Activated CD8-positive, alpha-beta T cell treated with anti-CD3 and anti-CD28 coated beads for 36 hours (primary cell): ENCODE measurements at regions of chr1 and their contacts with region 1.

Region 1: GRCh38 chr1:155244368-155245162 is 10.7 kb downstream of the ENTREP3 start:
- DNase-seq: peak; percentile 100
- ATAC-seq: peak; percentile 97
- H3K4me3 Mint-ChIP-seq: peak overlapping the region; percentile 71
- H3K27ac Mint-ChIP-seq: peak overlapping the region; percentile 95
- H3K4me1 Mint-ChIP-seq: peaks cover 41% of the 10 kb centered on the region
- H3K27me3 Mint-ChIP-seq: peaks cover 2% of the 10 kb centered on the region
- CTCF ChIP-seq: peak; percentile 39

Region 2: DNA sequence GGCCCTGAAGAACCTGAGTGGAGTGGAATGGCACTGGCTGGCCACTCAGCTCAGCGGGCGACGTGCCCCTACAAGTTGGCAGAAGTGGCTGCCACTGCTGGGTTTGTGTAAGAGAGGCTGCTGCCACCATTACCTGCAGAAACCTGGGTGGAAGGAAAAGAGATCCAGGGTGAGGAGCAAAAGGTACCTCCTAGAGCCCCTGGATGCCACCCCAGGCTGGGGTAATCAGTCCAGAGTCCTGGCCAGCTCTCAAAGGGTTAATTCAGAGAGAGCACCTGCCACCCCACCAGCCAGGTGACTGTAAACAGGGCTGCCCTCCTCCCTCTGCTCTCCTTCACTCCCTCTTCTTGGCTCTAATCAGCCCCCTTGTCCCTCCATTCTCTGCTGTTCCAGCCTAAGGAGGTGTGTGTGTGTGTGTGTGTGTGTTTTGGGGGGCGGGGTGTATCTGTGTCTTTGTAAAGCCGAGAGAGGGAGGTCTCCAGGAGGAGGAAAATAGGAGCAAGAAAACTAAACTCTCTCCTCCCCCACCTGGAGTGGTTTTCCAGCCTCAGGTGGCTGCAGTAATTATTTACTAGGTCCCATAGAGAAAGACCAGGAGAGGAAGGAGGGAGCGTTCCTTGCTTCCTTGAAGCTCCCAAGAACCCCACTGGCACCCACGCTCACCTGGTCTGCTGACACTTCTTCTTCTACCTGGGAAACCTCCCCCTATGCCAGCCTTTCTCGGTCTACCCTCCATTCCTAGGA is 58.3 kb before region 1 on chr1:
- CTCF ChIA-PET with region 1: no interaction called
- POLR2A ChIA-PET with region 1: no interaction called
- intact Hi-C with region 1: no loop called
- DNase-seq: no peak
- ATAC-seq: no peak
- H3K4me3 Mint-ChIP-seq: no peak overlapping the region
- H3K27ac Mint-ChIP-seq: no peak overlapping the region
- H3K4me1 Mint-ChIP-seq: no peaks in the 10 kb centered on the region
- H3K27me3 Mint-ChIP-seq: no peaks in the 10 kb centered on the region
- CTCF ChIP-seq: no peak

Region 3: GRCh38 chr1:155208541-155209311 is 35.8 kb before region 1 on chr1 and contains the start of gene MTX1:
- CTCF ChIA-PET with region 1: interaction called, 47 read pairs
- POLR2A ChIA-PET with region 1: interaction called, 22 read pairs
- intact Hi-C with region 1: loop called (anchors 5 kb)
- DNase-seq: peak; percentile 94
- ATAC-seq: peak; percentile 86
- H3K4me3 Mint-ChIP-seq: peak within 1 kb of the TSS; percentile 92
- H3K27ac Mint-ChIP-seq: peak within 1 kb of the TSS; percentile 89
- H3K4me1 Mint-ChIP-seq: peaks cover 29% of the 10 kb centered on the region
- H3K27me3 Mint-ChIP-seq: no peaks in the 10 kb centered on the region
- CTCF ChIP-seq: no peak
- total RNA-seq, gene MTX1: 59.2 to 61.0 TPM

Region 4: DNA sequence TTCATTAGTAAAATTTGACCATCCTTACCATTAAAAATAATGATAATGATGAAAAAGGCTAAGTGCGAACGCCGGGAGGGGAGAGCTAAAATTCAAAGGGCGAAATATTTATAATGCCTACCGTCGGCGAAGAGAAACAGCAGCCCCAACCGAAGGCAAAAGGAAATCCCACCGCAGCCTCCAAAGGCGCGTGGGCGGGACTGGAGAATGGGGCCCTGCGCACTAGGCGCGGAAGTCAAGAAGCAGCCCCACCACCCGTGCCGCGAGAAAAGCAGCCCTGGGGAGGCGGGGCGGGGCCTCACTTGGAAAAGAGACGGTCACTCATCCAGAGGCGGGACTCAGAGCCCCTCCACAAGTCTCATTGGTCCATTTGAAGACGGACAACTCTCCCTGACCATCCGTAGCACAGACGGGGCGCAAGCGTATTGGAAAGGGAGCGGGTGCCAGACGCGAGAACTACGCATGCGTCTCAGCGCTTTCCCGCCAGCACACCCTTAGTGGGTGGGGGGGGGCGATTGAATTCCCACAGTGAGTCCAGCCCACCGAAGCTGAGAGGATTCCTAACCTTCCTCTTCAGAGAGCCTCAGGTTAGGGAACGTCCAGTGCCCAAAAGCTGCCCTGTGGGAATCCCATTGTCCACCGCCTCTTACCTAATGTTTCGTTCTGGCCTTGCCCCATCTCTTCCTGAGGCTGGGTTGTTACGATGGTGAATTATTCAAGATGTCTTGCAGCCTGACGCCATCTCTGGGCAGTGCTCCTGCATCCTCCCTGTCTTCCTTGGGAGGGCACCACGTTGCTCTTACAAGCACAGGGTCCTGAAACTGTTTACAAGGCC is 17.1 kb before region 1 on chr1:
- CTCF ChIA-PET with region 1: interaction called, 18 read pairs
- POLR2A ChIA-PET with region 1: interaction called, 23 read pairs
- intact Hi-C with region 1: no loop called
- DNase-seq: peak; percentile 100
- ATAC-seq: peak; percentile 98
- H3K4me3 Mint-ChIP-seq: peak overlapping the region; percentile 91
- H3K27ac Mint-ChIP-seq: peak overlapping the region; percentile 99
- H3K4me1 Mint-ChIP-seq: peaks cover 37% of the 10 kb centered on the region
- H3K27me3 Mint-ChIP-seq: no peaks in the 10 kb centered on the region
- CTCF ChIP-seq: no peak

Region 5: DNA sequence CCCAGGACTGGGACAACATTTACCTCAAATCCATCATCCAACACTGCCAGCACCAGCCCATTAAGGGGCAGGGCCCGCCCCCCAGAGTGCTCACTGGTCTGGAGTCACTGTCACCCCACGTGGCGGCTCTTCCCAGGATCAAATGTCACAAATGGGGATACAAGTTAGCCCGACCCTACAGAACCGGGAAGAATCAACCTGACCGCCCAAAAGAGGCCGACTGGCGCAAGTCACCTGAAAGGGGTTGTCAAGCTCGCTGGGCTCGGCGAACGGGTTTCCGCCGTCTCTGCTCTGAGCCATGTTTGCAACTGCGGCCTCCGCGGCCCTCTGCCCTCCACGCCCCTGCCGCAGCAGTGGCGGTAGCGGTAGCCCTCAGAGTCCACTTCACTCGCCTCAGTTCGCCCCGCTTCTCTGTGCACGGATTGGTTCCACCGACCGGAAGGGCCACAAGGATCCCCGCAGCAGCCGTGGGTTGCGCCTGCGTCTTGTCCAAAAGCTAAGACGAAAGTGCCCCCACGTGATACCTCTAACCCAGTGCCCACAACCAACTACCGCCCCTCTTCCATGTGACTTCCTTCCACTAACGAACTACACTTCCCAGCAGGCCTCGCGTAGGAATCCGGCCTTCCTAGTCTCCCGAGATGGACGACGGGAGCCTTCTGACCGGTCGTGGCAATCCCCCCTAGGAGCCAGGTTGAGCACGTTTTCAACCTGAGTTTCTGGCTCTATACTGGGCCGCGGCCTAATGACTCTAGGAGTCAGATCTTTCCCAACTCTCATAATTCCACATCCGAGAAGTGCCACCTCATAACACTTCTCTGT is 17.5 kb after region 1 on chr1 and contains the start of gene SCAMP3:
- CTCF ChIA-PET with region 1: interaction called, 232 read pairs
- POLR2A ChIA-PET with region 1: interaction called, 33 read pairs
- intact Hi-C with region 1: no loop called
- DNase-seq: peak; percentile 97
- ATAC-seq: peak; percentile 93
- H3K4me3 Mint-ChIP-seq: peak within 1 kb of the TSS; percentile 96
- H3K27ac Mint-ChIP-seq: peak within 1 kb of the TSS; percentile 89
- H3K4me1 Mint-ChIP-seq: peaks cover 29% of the 10 kb centered on the region
- H3K27me3 Mint-ChIP-seq: no peaks in the 10 kb centered on the region
- CTCF ChIP-seq: no peak
- total RNA-seq, gene SCAMP3: 81.3 to 97.2 TPM

Region 6: GRCh38 chr1:155285631-155286044 is 41.1 kb after region 1 on chr1:
- CTCF ChIA-PET with region 1: no interaction called
- POLR2A ChIA-PET with region 1: no interaction called
- intact Hi-C with region 1: no loop called
- DNase-seq: no peak
- ATAC-seq: no peak
- H3K4me3 Mint-ChIP-seq: no peak overlapping the region
- H3K27ac Mint-ChIP-seq: no peak overlapping the region
- H3K4me1 Mint-ChIP-seq: no peaks in the 10 kb centered on the region
- H3K27me3 Mint-ChIP-seq: peaks cover 3% of the 10 kb centered on the region
- CTCF ChIP-seq: no peak